Heart left ventricle (tissue), 16 donors: ENCODE measurements at regions of chr2 and their contacts with region 1.

Region 1: DNA sequence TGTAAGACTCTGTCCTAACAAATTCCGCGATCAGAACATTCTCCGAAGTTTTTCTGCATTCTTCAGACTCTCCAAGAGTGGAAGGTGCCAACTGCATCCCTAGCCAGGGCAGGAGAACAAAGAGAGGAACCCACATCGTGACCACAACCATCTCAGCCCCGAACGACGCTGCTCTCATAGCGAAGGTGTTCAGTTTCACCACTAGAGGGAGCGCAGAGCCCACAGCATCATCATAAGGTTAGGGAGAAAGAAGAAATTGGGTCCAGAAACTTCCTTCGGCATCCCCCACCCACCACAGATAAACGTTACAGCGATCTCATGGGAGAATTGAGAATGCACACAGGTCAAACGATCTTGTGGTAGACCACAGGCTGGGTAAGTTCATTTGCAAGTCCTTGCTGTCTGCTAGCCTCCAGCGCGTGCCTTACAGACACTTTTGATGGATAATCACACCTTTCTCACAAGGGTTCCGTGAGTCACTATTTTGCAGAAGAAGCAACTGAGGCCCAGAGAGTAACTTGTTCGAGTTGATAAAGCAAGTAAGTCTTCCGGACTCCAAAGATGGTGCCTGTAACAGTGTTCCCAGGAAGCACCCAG is 53.7 kb upstream of the ARL4C start:
- DNase-seq: peak in 4 of 5 donors; percentile 52 to 59 (median 54)
- ATAC-seq: peak; percentile 75 to 83 (median 79)
- H3K4me3 ChIP-seq: no peak overlapping the region
- H3K27ac ChIP-seq: no peak overlapping the region
- H3K4me1 ChIP-seq: peaks cover 0 to 3% (median 0%) of the 10 kb centered on the region in 12 donors
- H3K27me3 ChIP-seq: peaks cover 0 to 20% (median 0%) of the 10 kb centered on the region in 9 donors
- CTCF ChIP-seq: peak; percentile 90 to 99 (median 94)
- POLR2A ChIP-seq: no peak

Region 2: DNA sequence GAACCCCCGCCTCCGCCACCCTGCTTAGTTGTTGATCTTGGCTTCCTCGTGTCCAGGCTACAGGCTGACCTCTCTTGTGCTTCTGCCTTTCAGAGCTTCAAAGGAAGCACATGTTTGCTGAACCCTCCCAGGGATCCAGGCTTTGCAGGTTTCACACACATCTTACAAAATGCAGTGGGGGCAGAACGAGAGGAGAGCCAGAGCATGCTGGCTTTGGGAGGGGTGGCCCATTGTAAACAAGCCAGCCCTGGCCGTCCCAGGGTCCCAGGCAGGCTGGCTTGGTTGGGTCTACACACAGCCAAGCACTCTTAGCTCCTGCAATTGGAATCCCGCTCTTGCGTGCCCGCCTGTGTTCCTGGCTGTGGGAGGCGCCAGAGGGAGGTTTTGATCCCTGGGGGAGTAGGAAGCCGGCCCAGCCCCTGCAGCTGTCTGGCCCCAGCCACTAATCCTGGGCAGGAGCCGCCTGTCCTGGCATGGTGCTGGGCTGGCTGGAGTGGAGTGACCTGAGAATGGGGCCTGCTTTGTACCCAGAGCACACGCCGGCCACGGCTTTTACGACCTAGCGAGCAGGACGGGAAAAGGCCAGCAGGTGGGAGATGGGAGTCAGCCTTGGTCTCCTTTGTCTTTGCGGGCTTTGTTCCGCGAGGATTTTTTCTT is 455.1 kb after region 1 on chr2:
- intact Hi-C with region 1: loop called in 1 of 10 experiments (anchors 5 kb)
- DNase-seq: peak in 4 of 5 donors; percentile 38 to 76 (median 67)
- ATAC-seq: peak; percentile 77 to 90 (median 86)
- H3K4me3 ChIP-seq: no peak overlapping the region
- H3K27ac ChIP-seq: peak overlapping the region in 2 of 12 donors; percentile 27 to 37
- H3K4me1 ChIP-seq: peaks cover 0 to 46% (median 20%) of the 10 kb centered on the region in 12 donors
- H3K27me3 ChIP-seq: no peaks in the 10 kb centered on the region
- CTCF ChIP-seq: peak in 8 of 12 donors; percentile 25 to 43 (median 36)
- POLR2A ChIP-seq: no peak

Region 3: DNA sequence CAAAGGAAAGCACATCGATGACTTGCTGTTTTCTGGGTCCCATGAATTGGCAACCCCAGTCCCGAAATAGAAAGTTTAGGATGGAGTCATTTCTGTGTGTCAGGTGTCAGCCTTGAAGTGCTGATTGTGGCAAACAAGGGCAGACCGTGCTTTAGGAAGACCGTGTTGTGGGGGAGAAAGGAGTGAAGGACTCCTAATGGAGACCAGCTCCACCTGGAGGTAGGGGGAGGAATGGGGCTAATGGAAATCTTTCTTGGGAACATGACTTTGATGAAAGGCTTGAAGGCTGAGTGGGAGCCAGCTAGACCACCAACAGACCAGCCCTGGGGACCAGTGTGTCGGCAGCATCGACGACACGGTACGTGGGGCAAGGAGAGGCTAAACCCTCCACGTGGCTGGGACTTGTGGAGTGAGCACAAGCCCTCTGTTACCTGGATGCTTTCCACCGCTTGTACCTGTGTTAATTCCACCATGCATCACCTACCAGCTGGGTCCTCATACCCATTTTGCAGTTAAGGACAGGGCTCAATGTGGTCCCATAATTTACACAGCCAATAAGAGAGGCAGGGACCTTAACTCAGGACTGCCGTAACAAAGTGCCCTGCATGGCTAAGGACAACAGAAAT is 505.4 kb after region 1 on chr2:
- intact Hi-C with region 1: loop called in 1 of 10 experiments (anchors 5 kb)
- DNase-seq: peak in 1 of 5 donors; percentile 30
- ATAC-seq: peak in 3 of 4 donors; percentile 5 to 39 (median 30)
- H3K4me3 ChIP-seq: no peak overlapping the region
- H3K27ac ChIP-seq: no peak overlapping the region
- H3K4me1 ChIP-seq: peaks cover 2 to 21% (median 9%) of the 10 kb centered on the region in 12 donors
- H3K27me3 ChIP-seq: no peaks in the 10 kb centered on the region
- CTCF ChIP-seq: peak; percentile 43 to 62 (median 52)
- POLR2A ChIP-seq: no peak

Region 4: DNA sequence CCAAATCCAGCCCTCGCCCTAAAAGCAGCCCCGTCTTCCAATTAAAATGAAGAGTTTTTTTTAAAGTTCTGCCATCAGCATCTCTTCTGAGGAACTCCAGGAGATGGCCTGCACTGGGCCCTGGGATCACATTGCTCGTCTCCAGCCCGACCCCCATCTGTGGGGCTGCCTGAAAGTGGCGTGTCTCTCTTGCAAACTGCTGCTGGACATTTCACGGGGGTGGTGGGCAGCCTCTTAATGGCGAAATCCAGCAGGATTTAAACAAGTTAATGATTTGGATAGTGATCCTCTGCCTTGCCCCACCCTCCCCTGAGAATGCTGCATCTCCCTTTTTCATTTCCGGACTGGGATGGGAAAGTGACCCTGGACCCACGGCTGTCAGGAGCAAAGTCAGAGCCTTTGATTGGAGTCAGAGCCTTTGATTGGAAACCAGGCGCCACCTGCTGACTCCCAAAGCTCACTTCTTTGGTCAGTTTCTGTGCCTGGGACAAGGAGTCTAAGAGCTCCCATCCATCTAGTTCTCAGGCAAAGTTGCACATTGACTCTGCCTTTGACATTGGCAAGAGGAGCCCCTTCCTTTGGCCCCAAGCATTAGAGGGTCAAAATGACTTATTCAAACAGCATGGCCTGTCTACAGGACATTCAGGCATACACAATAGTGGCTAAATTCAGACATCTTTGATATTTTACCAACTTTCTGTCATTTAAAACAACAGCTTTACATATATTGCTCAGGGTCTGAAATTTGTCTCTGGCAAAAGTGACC is 556.4 kb after region 1 on chr2:
- intact Hi-C with region 1: loop called (anchors 1 to 5 kb)
- DNase-seq: peak; percentile 54 to 71 (median 67)
- ATAC-seq: peak; percentile 55 to 87 (median 74)
- H3K4me3 ChIP-seq: no peak overlapping the region
- H3K27ac ChIP-seq: no peak overlapping the region
- H3K4me1 ChIP-seq: peaks cover 0 to 13% (median 2%) of the 10 kb centered on the region in 12 donors
- H3K27me3 ChIP-seq: no peaks in the 10 kb centered on the region
- CTCF ChIP-seq: peak; percentile 41 to 84 (median 74)
- POLR2A ChIP-seq: no peak

Region 5: GRCh38 chr2:235116885-235117492 is 566.4 kb after region 1 on chr2:
- intact Hi-C with region 1: loop called in 3 of 10 experiments (anchors 1 to 2 kb)
- DNase-seq: no peak
- ATAC-seq: no peak
- H3K4me3 ChIP-seq: no peak overlapping the region
- H3K27ac ChIP-seq: no peak overlapping the region
- H3K4me1 ChIP-seq: no peaks in the 10 kb centered on the region
- H3K27me3 ChIP-seq: peaks cover 0 to 10% (median 0%) of the 10 kb centered on the region in 9 donors
- CTCF ChIP-seq: peak; percentile 64 to 83 (median 71)
- POLR2A ChIP-seq: no peak

Region 6: GRCh38 chr2:235244255-235245220 is 693.9 kb after region 1 on chr2:
- intact Hi-C with region 1: loop called in 1 of 10 experiments (anchors 5 kb)
- DNase-seq: no peak
- ATAC-seq: no peak
- H3K4me3 ChIP-seq: no peak overlapping the region
- H3K27ac ChIP-seq: no peak overlapping the region
- H3K4me1 ChIP-seq: no peaks in the 10 kb centered on the region
- H3K27me3 ChIP-seq: peaks cover 0 to 12% (median 0%) of the 10 kb centered on the region in 9 donors
- CTCF ChIP-seq: no peak
- POLR2A ChIP-seq: no peak